MCF 10A (cell line): ENCODE measurements at regions of chr1 and their contacts with region 1.

Region 1: DNA sequence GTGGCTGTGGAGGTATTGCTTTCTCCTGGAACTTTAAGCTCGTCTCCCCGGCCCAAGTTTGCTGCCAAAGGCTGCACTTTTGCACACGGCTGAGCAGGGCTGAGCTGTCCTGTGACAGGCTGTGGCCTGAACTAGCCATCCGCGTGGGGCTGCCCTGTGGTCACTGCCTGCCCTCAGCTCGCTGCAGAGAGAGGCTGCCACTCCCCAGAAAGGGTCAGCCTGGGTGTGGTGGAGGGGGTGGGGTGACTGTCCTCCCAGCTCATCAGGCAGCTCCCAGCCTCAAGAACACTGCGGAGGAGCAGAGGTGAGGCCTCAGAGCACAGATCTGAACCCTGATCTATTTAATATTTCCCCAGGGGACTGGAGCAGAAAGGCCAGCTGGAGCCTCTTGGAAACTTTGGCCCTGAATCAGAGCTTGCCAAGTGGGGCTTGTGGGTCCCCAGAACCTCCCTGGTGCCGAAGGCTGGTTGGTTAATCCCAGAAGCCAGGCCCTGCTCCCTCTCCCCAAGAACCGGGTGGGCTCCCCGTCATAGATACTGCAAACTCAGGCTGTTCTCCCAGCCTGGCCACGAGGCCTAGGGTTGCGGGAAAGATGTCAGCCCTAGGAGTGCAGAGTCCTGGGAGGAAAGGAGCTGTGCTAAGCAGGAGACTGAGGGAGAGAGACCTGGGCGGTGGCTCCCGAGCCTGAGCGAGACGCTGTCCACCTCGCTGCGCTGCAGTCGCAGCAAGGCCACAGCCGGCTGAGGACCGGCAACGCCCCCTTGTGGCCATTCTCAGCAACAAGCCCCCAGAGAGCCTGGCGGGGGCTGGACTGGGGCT is 125.1 kb upstream of the IPO9 start:
- DNase-seq: peak; percentile 90
- H3K4me3 Mint-ChIP-seq: no peak overlapping the region
- H3K27ac Mint-ChIP-seq: peak overlapping the region; percentile 16
- H3K4me1 Mint-ChIP-seq: peaks cover 25% of the 10 kb centered on the region
- H3K27me3 Mint-ChIP-seq: no peaks in the 10 kb centered on the region
- CTCF ChIP-seq: peak; percentile 100

Region 2: GRCh38 chr1:201481761-201482493 is 221.9 kb before region 1 on chr1:
- CTCF ChIA-PET with region 1: interaction called, 25 read pairs
- POLR2A ChIA-PET with region 1: no interaction called
- intact Hi-C with region 1: loop called (anchors 2 kb)
- DNase-seq: peak; percentile 94
- H3K4me3 Mint-ChIP-seq: peak overlapping the region; percentile 0
- H3K27ac Mint-ChIP-seq: no peak overlapping the region
- H3K4me1 Mint-ChIP-seq: peaks cover 33% of the 10 kb centered on the region
- H3K27me3 Mint-ChIP-seq: no peaks in the 10 kb centered on the region
- CTCF ChIP-seq: peak; percentile 100

Region 3: DNA sequence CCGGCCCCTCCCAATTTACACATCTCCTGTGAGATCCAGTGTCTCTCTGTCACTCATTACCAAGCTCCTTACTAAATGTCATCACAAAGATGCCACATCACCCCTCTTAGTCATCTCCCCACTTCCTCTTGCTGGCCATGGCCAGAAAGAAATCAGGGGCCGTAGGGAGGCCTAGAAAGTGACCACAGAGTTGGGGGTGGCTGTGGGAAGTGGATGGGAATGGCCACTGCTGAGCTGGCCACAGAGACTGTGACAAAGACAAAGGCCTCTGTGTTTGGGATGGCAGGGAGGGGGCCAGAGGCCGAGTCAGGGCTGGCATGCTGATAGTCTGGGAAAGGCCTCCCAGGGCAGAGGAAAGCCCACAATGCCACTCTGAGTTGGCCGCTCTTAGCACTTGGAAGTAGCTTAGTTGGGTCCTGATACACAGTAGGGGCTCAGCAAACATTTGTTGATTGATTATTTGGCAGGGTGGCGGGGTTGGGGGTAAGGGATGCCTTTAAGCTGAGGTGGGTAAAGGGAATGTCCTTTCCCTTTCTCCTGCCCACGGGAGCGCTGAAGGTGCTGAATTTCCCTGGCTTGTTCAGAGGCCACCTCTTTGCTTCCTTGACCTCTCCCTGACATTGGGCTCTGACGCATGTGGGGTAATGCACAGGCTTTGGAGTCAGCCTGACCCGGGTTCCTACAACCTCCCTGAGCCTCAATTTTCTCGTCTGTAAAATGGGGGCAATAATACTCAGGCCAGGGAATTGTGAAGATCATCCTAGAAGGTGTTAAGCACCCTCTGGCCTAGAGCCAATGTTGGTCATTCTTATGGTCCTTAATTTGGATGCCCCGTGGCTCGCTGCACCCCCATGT is 151.7 kb before region 1 on chr1:
- CTCF ChIA-PET with region 1: interaction called, 779 read pairs
- POLR2A ChIA-PET with region 1: interaction called, 4 read pairs
- intact Hi-C with region 1: no loop called
- DNase-seq: no peak
- H3K4me3 Mint-ChIP-seq: no peak overlapping the region
- H3K27ac Mint-ChIP-seq: no peak overlapping the region
- H3K4me1 Mint-ChIP-seq: no peaks in the 10 kb centered on the region
- H3K27me3 Mint-ChIP-seq: no peaks in the 10 kb centered on the region
- CTCF ChIP-seq: no peak

Region 4: GRCh38 chr1:201593200-201593921 is 110.5 kb before region 1 on chr1:
- CTCF ChIA-PET with region 1: interaction called, 34 read pairs
- POLR2A ChIA-PET with region 1: interaction called, 3 read pairs
- intact Hi-C with region 1: no loop called
- DNase-seq: peak; percentile 100
- H3K4me3 Mint-ChIP-seq: peak overlapping the region; percentile 39
- H3K27ac Mint-ChIP-seq: peak overlapping the region; percentile 21
- H3K4me1 Mint-ChIP-seq: peaks cover 59% of the 10 kb centered on the region
- H3K27me3 Mint-ChIP-seq: peaks cover 10% of the 10 kb centered on the region
- CTCF ChIP-seq: no peak

Region 5: GRCh38 chr1:201649761-201650622 is 53.8 kb before region 1 on chr1:
- CTCF ChIA-PET with region 1: interaction called, 7 read pairs
- POLR2A ChIA-PET with region 1: interaction called, 3 read pairs
- intact Hi-C with region 1: loop called (anchors 2 kb)
- DNase-seq: peak; percentile 85
- H3K4me3 Mint-ChIP-seq: peak overlapping the region; percentile 80
- H3K27ac Mint-ChIP-seq: peak overlapping the region; percentile 79
- H3K4me1 Mint-ChIP-seq: peaks cover 15% of the 10 kb centered on the region
- H3K27me3 Mint-ChIP-seq: no peaks in the 10 kb centered on the region
- CTCF ChIP-seq: no peak

Region 6: GRCh38 chr1:201719812-201720521 is 16.1 kb after region 1 on chr1:
- CTCF ChIA-PET with region 1: interaction called, 103 read pairs
- POLR2A ChIA-PET with region 1: interaction called, 3 read pairs
- intact Hi-C with region 1: no loop called
- DNase-seq: no peak
- H3K4me3 Mint-ChIP-seq: no peak overlapping the region
- H3K27ac Mint-ChIP-seq: peak overlapping the region; percentile 52
- H3K4me1 Mint-ChIP-seq: peaks cover 23% of the 10 kb centered on the region
- H3K27me3 Mint-ChIP-seq: no peaks in the 10 kb centered on the region
- CTCF ChIP-seq: no peak